ENCODE measurements at regions of chr1 and their contacts with region 1.

Region 1: GRCh38 chr1:191125950-191126349 is 648.3 kb upstream of the BRINP3 start:
- DNase-seq: no peak
- H3K4me3 ChIP-seq: no peak overlapping the region
- H3K27ac ChIP-seq: no peak overlapping the region
- H3K4me1 ChIP-seq: no peaks in the 10 kb centered on the region
- H3K27me3 ChIP-seq: no peaks in the 10 kb centered on the region
- CTCF ChIP-seq: no peak
- EP300 ChIP-seq: no peak
- POLR2A ChIP-seq: no peak
- RAD21 ChIP-seq: no peak

Region 2: DNA sequence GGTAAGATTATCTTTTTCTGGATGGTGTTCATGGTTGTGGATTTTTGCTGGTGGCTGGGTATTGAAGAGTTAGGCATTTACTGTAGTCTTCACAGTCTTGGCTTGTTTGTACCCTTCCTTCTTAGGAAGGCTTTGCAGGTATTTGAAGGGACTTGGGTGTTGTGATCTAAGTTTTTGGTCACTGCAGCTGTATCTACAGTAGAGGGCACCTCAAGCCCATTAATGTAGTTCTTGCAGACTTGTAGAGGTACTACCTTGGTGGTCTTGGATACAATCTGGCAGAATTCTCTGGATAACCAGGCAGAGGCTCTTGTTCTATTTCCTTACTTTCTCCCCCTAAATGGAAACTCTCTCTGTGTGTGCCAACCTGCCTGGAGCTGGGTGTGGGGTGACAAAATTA is 492.5 kb before region 1 on chr1:
- CTCF ChIA-PET with region 1: interaction called, 11 read pairs
- POLR2A ChIA-PET with region 1: no interaction called
- DNase-seq: no peak
- H3K4me3 ChIP-seq: no peak overlapping the region
- H3K27ac ChIP-seq: no peak overlapping the region
- H3K4me1 ChIP-seq: no peaks in the 10 kb centered on the region
- H3K27me3 ChIP-seq: no peaks in the 10 kb centered on the region
- CTCF ChIP-seq: peak in 2 of 3 experiments; percentile 51 to 69; a peak in 3 of 4 replicates
- EP300 ChIP-seq: no peak
- POLR2A ChIP-seq: no peak
- RAD21 ChIP-seq: peak; percentile 83 to 84

Region 3: GRCh38 chr1:191222206-191222605 is 96.3 kb after region 1 on chr1:
- CTCF ChIA-PET with region 1: no interaction called
- POLR2A ChIA-PET with region 1: no interaction called
- DNase-seq: no peak
- H3K4me3 ChIP-seq: no peak overlapping the region
- H3K27ac ChIP-seq: no peak overlapping the region
- H3K4me1 ChIP-seq: no peaks in the 10 kb centered on the region
- H3K27me3 ChIP-seq: no peaks in the 10 kb centered on the region
- CTCF ChIP-seq: no peak
- EP300 ChIP-seq: no peak
- POLR2A ChIP-seq: no peak
- RAD21 ChIP-seq: no peak